Activated CD8-positive, alpha-beta memory T cell treated with anti-CD3 and anti-CD28 coated beads, Interleukin-2, amount 10 ng/mL, durations not matched to agents 7 days and 5 days (primary cell): ENCODE measurements at regions of chr11 and their contacts with region 1.

Region 1: DNA sequence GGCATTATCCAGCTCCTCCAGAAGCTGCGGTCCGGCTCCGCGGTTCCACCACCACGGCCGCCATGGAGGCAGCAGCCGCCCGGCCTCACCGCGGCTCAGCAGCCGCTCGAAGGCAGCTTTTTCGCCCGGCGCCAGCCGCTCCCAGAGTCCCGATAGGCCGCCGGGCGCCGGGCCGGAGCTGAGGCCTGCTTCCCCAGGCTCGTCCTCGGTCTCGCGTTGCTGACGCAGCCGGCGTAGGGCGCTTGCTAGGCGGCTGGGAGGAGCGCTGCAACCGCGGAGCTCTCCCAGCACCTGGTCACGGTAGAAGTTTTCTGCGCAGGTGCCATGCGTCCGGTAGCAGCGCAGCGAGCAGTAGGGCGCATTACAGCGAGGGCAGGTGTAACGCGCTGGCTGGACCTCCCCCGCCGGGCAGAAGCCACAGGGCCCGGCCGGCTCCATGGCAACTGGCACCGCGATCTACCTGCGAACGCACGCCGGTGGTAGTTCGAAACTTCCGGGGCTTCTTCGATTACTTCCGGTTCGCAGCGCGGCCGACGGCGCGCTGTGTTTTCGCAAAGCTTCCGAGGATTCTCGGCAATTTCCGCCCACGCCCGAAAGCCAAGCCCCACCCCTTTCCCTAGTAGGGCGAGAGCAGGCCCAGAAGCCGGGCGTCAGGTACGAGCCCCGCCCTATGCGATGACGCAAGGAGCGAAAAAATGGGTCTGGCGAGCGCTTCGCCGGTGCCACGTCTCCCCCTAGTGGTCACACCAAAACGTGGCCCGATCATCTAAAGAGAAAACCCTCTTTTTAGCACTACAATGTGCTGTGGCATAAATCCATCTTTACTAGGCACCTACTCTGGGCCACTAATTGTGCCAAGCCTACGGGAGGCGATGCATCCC is at the start of gene ZNHIT2:
- DNase-seq: peak; percentile 100
- ATAC-seq: peak; percentile 71
- H3K4me3 Mint-ChIP-seq: peak within 1 kb of the TSS; percentile 86
- H3K27ac Mint-ChIP-seq: peak within 1 kb of the TSS; percentile 91
- H3K4me1 Mint-ChIP-seq: peaks cover 64% of the 10 kb centered on the region
- H3K27me3 Mint-ChIP-seq: no peaks in the 10 kb centered on the region
- total RNA-seq, gene ZNHIT2: 10.5 to 13.5 TPM

Region 2: DNA sequence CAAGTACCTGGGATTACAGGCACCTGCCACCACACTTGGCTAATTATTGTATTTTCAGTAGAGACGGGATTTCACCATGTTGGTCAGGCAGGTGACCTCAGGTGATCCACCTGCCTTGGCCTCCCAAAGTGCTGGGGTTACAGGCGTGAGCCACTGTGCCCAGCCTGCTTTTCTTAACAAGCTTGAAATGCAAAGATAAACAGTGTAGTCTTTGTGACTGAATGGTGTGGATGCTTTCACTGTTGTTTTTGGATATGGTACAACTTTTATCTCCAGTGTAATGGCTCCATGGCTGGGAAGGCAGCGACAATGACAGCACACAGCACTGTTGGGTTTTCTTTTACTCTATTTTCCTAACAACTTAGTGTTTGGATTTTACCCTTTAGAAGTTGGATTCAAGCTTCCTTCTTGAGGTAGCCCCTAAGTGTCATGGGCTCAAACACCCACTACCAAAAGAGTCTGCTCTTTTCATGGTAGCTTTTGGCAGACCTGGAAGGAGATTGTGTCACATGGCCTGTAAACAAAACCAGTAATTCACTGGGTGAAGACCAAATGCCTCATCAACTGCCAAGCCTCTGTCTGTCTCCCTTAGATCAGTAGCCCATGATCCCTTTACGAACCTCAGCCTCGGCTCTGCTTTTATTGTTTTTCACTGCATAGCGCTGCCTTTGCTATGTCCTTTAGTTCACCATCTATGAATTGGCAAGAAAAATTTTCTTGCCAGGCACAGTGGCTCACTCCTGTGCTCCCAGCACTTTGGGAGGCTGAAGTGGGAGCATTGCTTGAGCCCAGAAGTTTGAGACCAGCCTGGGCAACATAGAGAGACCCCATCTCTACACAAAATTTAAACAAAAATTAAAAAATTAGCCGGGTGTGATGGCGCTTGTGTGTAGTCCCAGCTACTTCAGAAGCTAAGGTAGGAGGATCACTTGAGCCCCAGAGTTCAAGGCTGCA is 15.0 kb before region 1 on chr11:
- CTCF ChIA-PET with region 1: interaction called, 114 read pairs
- DNase-seq: no peak
- ATAC-seq: no peak
- H3K4me3 Mint-ChIP-seq: no peak overlapping the region
- H3K27ac Mint-ChIP-seq: no peak overlapping the region
- H3K4me1 Mint-ChIP-seq: peaks cover 27% of the 10 kb centered on the region
- H3K27me3 Mint-ChIP-seq: no peaks in the 10 kb centered on the region

Region 3: DNA sequence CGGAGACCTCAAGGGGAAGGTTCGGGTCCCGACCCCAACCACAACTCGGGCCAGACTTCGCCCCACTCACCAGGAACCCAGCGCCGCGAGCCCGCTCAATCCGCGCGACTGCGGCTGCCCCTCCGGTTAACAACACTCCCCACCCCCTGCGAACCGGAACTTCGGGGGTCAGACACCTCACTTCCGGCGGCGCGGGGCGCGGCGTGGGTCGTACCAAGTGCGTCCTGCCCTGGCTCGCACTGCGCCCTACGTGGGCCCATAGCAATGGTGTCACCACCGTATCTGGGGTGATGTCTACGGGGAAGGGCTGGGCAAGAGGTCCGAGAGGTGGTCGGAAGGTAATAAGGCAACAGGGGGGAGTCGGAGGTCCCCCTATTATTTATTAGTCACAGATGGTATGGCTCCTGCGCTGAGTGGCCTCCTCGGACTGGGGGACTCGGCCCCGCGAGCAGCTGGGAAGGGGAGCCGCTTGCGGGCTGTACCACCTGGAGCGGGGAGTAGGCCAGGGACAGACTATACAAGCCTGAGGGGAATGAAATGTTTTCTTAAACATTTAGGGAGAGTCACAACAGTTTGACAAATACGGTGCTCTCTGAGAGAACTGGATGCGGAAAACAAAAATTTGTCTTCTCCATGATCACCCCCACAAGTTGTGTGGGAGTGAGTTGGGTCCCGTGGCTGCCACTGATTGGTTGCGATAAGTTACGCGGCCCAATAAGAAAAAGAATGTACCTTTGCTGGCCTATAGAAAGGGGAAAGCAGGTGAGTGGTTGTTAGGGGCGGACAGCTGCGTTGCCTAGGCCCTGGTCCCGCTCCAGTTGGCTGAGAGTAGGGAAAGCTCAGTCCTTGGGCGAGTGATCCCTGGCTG is 17.2 kb after region 1 on chr11 and contains the start of gene SYVN1:
- CTCF ChIA-PET with region 1: interaction called, 31 read pairs
- DNase-seq: peak; percentile 93
- ATAC-seq: peak; percentile 91
- H3K4me3 Mint-ChIP-seq: peak within 1 kb of the TSS; percentile 96
- H3K27ac Mint-ChIP-seq: peak within 1 kb of the TSS; percentile 100
- H3K4me1 Mint-ChIP-seq: peaks cover 34% of the 10 kb centered on the region
- H3K27me3 Mint-ChIP-seq: no peaks in the 10 kb centered on the region
- total RNA-seq, gene SYVN1: 34.4 to 35.1 TPM

Region 4: GRCh38 chr11:65204646-65205601 is 87.5 kb after region 1 on chr11:
- CTCF ChIA-PET with region 1: no interaction called
- DNase-seq: peak; percentile 55
- ATAC-seq: peak; percentile 63
- H3K4me3 Mint-ChIP-seq: no peak overlapping the region
- H3K27ac Mint-ChIP-seq: no peak overlapping the region
- H3K4me1 Mint-ChIP-seq: peaks cover 8% of the 10 kb centered on the region
- H3K27me3 Mint-ChIP-seq: no peaks in the 10 kb centered on the region